ENCODE measurements at regions of chr6 and their contacts with region 1.

Region 1: DNA sequence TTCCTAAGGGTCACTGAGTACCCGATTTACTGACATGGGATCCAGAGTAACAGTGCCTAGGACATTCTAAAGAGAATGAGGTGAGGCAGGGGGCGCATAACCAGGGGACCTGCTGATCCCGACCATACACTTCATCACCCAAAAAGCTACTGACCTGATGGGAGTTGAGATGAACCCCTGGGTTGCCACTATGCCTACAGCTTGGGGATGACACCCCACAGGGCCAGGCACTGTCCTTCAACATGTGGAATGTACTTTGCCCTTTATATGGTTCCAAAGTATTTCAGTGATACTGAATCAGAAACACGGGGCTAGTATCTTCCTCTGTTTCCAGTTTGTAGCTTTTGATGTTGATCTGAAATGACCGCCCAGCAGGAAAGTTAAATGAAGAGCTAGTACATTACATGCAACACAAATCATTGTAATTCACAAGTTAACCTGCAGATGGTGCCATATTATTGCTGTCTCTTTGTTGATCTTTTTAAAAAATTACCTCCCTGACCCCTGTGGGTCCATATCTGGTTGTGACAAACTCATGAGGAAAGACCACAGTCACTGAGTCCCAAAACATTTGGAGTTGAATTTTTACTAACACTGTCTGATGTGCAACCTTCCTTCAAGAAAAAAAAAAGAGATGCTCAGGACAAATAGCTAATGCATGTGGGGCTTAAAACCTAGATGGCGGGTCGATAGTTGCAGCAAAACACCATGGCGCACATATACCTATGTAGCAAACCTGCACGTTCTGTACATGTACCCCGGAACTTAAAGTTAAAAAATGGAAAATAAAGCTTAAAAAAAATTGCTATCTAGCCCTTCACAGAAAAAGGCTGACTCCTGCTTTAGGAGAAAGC is 42.7 kb upstream of the GCNT2 start:
- DNase-seq: no peak
- H3K4me3 ChIP-seq: no peak overlapping the region
- H3K27ac ChIP-seq: no peak overlapping the region
- H3K4me1 ChIP-seq: no peaks in the 10 kb centered on the region
- H3K27me3 ChIP-seq: no peaks in the 10 kb centered on the region
- CTCF ChIP-seq: peak; percentile 44

Region 2: GRCh38 chr6:10542213-10542612 is 63.8 kb after region 1 on chr6:
- intact Hi-C with region 1: no loop called
- DNase-seq: peak; percentile 40
- H3K4me3 ChIP-seq: no peak overlapping the region
- H3K27ac ChIP-seq: no peak overlapping the region
- H3K4me1 ChIP-seq: no peaks in the 10 kb centered on the region
- H3K27me3 ChIP-seq: no peaks in the 10 kb centered on the region
- CTCF ChIP-seq: no peak

Region 3: GRCh38 chr6:10800829-10801535 is 322.6 kb after region 1 on chr6:
- intact Hi-C with region 1: loop called (anchors 2 kb)
- DNase-seq: peak; percentile 51
- H3K4me3 ChIP-seq: no peak overlapping the region
- H3K27ac ChIP-seq: no peak overlapping the region
- H3K4me1 ChIP-seq: no peaks in the 10 kb centered on the region
- H3K27me3 ChIP-seq: no peaks in the 10 kb centered on the region
- CTCF ChIP-seq: peak; percentile 98

Region 4: GRCh38 chr6:11067348-11067747 is 588.9 kb after region 1 on chr6:
- intact Hi-C with region 1: loop called (anchors 10 kb)
- DNase-seq: no peak
- H3K4me3 ChIP-seq: no peak overlapping the region
- H3K27ac ChIP-seq: no peak overlapping the region
- H3K4me1 ChIP-seq: no peaks in the 10 kb centered on the region
- H3K27me3 ChIP-seq: no peaks in the 10 kb centered on the region
- CTCF ChIP-seq: no peak